ENCODE measurements at regions of chr11 and their contacts with region 1.

Region 1: GRCh38 chr11:61477727-61478148 is 30.8 kb upstream of the LRRC10B start:
- H3K4me3 ChIP-seq: no peak overlapping the region
- H3K27ac ChIP-seq: no peak overlapping the region
- H3K4me1 ChIP-seq: no peaks in the 10 kb centered on the region
- CTCF ChIP-seq: peak; percentile 71

Region 2: DNA sequence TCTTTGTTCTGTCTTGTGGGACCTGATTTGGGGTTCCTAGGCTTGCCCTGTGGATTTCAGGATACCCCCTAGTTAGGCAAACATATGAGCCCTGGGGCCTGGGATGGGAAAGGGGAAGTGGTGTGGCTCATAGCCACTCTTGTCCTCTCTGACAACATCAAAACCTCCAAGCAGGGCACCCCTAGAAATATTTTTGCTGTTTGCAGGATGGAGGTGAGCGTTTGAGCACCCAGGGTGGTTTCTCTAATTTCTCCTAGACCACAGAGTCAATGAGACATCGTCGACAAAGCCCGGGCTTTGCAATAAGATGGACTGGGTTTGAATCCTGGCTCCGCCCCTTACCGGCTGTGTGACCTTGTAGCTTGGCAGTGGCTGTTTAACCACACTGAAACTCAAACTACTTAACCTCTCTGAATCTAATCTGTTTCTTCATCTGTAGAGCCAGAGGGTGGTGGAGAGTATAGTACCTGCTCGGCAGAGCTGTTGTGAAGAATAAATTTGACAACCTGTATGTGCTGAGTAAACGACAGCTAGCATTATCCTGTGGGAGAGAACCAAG is 25.6 kb after region 1 on chr11:
- CTCF ChIA-PET with region 1: interaction called, 325 read pairs
- POLR2A ChIA-PET with region 1: no interaction called
- H3K4me3 ChIP-seq: no peak overlapping the region
- H3K27ac ChIP-seq: no peak overlapping the region
- H3K4me1 ChIP-seq: no peaks in the 10 kb centered on the region
- CTCF ChIP-seq: no peak

Region 3: GRCh38 chr11:61509043-61510029 is 31.6 kb after region 1 on chr11:
- CTCF ChIA-PET with region 1: interaction called, 325 read pairs
- POLR2A ChIA-PET with region 1: interaction called, 3 read pairs
- H3K4me3 ChIP-seq: peak overlapping the region; percentile 26
- H3K27ac ChIP-seq: no peak overlapping the region
- H3K4me1 ChIP-seq: no peaks in the 10 kb centered on the region
- CTCF ChIP-seq: peak; percentile 83

Region 4: GRCh38 chr11:61532139-61533038 is 54.7 kb after region 1 on chr11:
- CTCF ChIA-PET with region 1: interaction called, 19 read pairs
- POLR2A ChIA-PET with region 1: no interaction called
- H3K4me3 ChIP-seq: no peak overlapping the region
- H3K27ac ChIP-seq: no peak overlapping the region
- H3K4me1 ChIP-seq: no peaks in the 10 kb centered on the region
- CTCF ChIP-seq: peak; percentile 45; the same call in 1 of the 2 replicates

Region 5: DNA sequence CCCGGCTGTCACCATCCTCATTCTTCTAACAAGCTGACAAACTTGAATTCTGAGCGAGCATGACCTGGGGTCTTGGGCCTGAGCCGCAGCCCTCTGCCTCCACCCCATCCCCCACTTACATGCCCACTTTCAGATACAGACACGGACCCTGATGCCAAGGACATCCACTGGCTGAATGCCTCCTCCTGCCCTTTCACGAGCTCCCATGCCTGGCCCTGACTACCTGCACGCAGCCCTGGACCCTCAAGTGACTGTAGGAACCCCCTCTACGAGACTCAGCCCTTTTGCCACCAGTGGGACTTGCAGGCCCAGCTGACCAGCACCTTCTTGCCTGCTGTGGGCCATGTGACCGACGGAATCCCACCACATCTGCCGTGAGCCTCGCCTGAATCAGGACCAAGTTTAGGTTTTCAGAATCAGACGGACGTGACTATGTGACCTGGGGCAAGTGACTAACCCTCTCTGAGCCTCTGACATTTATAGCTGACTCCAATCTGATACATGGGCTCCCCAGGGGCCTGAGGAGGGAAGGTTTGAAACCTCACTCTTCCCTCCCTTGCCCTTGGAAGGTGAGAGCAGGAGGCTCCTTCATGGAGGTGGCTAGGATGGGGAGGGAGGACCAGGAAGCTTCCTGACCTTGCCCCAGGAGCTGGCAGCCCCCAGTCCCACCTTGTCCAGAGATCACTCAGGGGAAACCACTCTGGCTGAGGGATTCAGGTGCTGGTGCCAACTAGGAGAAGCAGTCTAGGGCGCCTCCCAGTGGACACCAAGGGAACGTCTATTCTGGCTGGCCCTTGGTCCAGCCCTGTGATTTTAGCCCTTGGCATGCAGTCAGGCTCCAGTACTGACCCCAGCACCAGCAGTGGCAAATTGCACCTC is 150.1 kb after region 1 on chr11:
- CTCF ChIA-PET with region 1: interaction called, 23 read pairs
- POLR2A ChIA-PET with region 1: no interaction called
- H3K4me3 ChIP-seq: no peak overlapping the region
- H3K27ac ChIP-seq: no peak overlapping the region
- H3K4me1 ChIP-seq: no peaks in the 10 kb centered on the region
- CTCF ChIP-seq: 0 out of 2 replicates have a peak, but pooled peaks have one; percentile 31

Region 6: DNA sequence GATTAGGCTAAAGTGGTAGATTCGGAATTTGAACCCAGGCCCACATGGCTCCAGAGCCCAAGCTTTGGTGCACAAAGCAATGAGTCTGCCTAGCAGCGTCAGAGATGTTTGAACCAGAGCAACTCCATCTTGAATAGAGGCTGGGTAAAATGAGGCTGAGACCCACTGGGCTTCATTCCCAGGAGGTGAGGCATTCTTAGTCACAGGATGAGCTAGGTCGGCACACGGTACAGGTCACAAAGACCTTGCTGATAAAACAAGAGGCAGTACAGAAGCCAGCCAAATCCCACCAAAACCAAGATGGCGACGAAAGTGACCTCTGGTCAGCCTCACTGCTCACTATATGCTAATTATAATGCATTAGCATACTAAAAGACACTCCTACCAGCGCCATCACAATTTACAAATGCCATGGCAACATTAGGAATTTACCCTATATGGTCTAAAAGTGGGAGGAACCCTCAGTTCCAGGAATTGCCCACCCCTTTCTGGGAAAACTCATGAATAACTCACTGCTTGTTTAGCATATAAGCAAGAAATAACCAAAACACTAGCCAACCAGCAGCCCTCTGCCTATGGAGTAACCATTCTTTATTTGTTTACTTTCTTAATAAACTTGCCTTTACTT is 162.2 kb after region 1 on chr11:
- CTCF ChIA-PET with region 1: interaction called, 17 read pairs
- POLR2A ChIA-PET with region 1: interaction called, 3 read pairs
- H3K4me3 ChIP-seq: no peak overlapping the region
- H3K27ac ChIP-seq: no peak overlapping the region
- H3K4me1 ChIP-seq: no peaks in the 10 kb centered on the region
- CTCF ChIP-seq: no peak

Measured in HEK293 (cell line).